Activated naive CD4-positive, alpha-beta T cell treated with anti-CD3 and anti-CD28 coated beads for 36 hours (primary cell): ENCODE measurements at regions of chr3 and their contacts with region 1.

Region 1: GRCh38 chr3:121834696-121835464 is at the starts of genes EAF2 and IQCB1:
- DNase-seq: peak; percentile 97
- H3K4me3 Mint-ChIP-seq: peak within 1 kb of the TSS; percentile 95
- H3K27ac Mint-ChIP-seq: peak within 1 kb of the TSS; percentile 88
- H3K4me1 Mint-ChIP-seq: peaks cover 36% of the 10 kb centered on the region
- H3K27me3 Mint-ChIP-seq: no peaks in the 10 kb centered on the region
- total RNA-seq, gene EAF2: 8.2 to 9.3 TPM
- total RNA-seq, gene IQCB1: 36.5 to 37.8 TPM

Region 2: GRCh38 chr3:120596116-120596852 is 1238.6 kb before region 1 on chr3 and contains the start of gene NDUFB4:
- CTCF ChIA-PET with region 1: no interaction called
- intact Hi-C with region 1: loop called (anchors 2 kb)
- DNase-seq: peak; percentile 97
- H3K4me3 Mint-ChIP-seq: peak within 1 kb of the TSS; percentile 86
- H3K27ac Mint-ChIP-seq: peak within 1 kb of the TSS; percentile 95
- H3K4me1 Mint-ChIP-seq: peaks cover 7% of the 10 kb centered on the region
- H3K27me3 Mint-ChIP-seq: no peaks in the 10 kb centered on the region
- total RNA-seq, gene NDUFB4: 146 to 152 TPM

Region 3: GRCh38 chr3:120791913-120792312 is 1043.0 kb before region 1 on chr3:
- CTCF ChIA-PET with region 1: no interaction called
- intact Hi-C with region 1: no loop called
- DNase-seq: no peak
- H3K4me3 Mint-ChIP-seq: no peak overlapping the region
- H3K27ac Mint-ChIP-seq: no peak overlapping the region
- H3K4me1 Mint-ChIP-seq: peaks cover 11% of the 10 kb centered on the region
- H3K27me3 Mint-ChIP-seq: no peaks in the 10 kb centered on the region

Region 4: GRCh38 chr3:121660356-121661171 is 174.3 kb before region 1 on chr3 and contains the start of gene HCLS1:
- CTCF ChIA-PET with region 1: no interaction called
- intact Hi-C with region 1: loop called (anchors 1 kb)
- DNase-seq: peak; percentile 82
- H3K4me3 Mint-ChIP-seq: peak within 1 kb of the TSS; percentile 99
- H3K27ac Mint-ChIP-seq: peak within 1 kb of the TSS; percentile 100
- H3K4me1 Mint-ChIP-seq: peaks cover 53% of the 10 kb centered on the region
- H3K27me3 Mint-ChIP-seq: no peaks in the 10 kb centered on the region
- total RNA-seq, gene HCLS1: 240 to 248 TPM

Region 5: GRCh38 chr3:122092460-122093165 is 257.7 kb after region 1 on chr3:
- CTCF ChIA-PET with region 1: interaction called, 3 read pairs
- intact Hi-C with region 1: loop called (anchors 1 kb)
- DNase-seq: peak; percentile 77
- H3K4me3 Mint-ChIP-seq: no peak overlapping the region
- H3K27ac Mint-ChIP-seq: no peak overlapping the region
- H3K4me1 Mint-ChIP-seq: peaks cover 10% of the 10 kb centered on the region
- H3K27me3 Mint-ChIP-seq: peaks cover 2% of the 10 kb centered on the region

Region 6: DNA sequence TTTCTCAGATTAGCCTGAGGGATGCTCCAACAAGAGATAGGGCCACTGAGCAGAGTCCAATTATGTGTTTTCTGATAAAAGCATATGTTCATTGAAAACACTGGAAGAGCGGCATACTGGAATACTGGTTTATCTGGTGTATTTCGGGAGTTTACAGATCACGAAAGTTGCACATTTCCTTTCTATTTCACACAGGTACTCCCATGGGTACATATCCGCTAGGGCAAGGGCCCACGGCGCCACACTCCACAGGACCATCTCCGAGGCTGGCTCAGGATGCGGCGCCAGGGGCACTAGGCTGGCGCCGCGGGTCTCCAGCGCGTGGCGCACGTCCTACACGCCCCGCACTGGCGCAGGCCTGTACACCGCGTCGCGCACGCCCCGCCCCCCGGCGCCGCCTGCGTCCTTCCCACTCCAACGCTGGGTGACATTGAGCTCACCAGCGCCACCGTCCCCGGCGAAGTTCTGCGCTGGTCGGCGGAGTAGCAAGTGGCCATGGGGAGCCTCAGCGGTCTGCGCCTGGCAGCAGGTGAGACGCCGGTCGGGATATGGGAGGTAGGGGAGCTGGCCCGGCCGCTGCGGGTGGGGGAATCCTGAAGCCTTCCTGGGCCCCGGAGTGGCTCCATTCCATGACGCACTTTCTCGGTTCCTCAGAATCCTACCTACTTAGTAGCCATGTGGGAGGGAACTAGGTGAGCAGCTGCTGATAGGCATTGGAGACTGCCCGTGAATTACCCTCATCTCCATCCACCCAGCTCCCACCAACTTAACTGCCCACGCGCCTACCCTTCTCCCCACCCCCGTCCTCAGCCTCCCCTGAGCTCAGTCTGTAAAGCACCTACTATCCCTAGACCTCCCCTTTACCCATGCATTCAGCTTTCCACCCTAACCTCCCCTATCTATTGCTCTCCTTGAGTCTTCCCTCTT is 549.2 kb after region 1 on chr3 and contains the start of gene FAM162A:
- CTCF ChIA-PET with region 1: no interaction called
- intact Hi-C with region 1: loop called (anchors 2 kb)
- DNase-seq: peak; percentile 93
- H3K4me3 Mint-ChIP-seq: peak within 1 kb of the TSS; percentile 90
- H3K27ac Mint-ChIP-seq: peak within 1 kb of the TSS; percentile 93
- H3K4me1 Mint-ChIP-seq: peaks cover 62% of the 10 kb centered on the region
- H3K27me3 Mint-ChIP-seq: no peaks in the 10 kb centered on the region
- total RNA-seq, gene FAM162A: 111 to 112 TPM

Region 7: DNA sequence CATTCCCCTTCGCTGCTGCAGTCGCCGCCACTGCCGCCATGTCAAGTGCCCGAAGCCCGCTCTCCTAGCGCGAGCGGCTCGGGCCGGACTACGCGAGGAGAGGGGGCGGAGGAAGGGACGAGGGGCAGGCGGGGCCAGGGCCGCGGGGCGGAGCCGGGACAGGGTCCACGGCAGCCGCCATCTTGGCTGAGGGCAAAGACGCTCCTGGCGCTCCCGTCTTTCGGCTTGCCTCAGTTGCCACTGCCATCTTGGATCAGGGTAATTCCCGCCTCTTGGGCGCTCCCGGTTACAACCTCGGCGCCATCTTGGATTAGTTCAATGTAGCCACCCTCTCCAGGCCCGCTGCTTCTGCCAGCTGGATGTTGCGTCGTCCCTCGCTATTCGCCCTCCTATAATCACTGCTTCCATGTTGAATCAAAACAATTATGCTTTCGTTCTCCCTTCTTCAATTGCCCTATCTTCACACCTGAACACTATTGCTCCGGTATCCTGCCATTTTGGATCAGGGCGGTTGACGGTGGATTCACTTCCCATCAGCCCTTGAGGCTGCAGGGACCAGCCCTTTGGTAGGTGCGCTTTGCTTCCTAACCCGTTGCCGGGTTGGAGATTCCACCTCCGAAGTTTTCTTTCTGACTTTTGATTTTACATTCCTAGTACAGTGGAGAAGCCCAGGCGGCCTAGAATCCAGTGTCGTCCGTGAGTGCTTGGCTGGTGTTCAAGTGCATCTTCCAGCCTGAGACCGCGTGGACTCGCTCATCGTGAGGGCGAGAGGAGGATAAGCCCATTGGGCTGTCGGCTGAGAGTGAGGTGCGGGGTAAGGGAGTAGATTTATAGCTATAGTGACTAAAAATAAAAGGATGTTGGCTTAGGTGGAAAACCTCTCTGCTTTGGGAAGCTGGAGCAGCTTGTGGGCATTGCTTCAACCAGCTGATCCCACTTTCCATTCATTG is 1750.4 kb after region 1 on chr3 and contains the start of gene HACD2:
- CTCF ChIA-PET with region 1: no interaction called
- intact Hi-C with region 1: loop called (anchors 1 kb)
- DNase-seq: peak; percentile 96
- H3K4me3 Mint-ChIP-seq: no peak within 1 kb of the TSS
- H3K27ac Mint-ChIP-seq: peak within 1 kb of the TSS; percentile 57
- H3K4me1 Mint-ChIP-seq: peaks cover 22% of the 10 kb centered on the region
- H3K27me3 Mint-ChIP-seq: no peaks in the 10 kb centered on the region
- total RNA-seq, gene HACD2: 25.9 TPM